PC-3 (cell line): ENCODE measurements at regions of chr2 and their contacts with region 1.

Region 1: GRCh38 chr2:206085742-206086445 is at the start of gene INO80D:
- DNase-seq: peak; percentile 70
- ATAC-seq: peak; percentile 69
- H3K4me3 ChIP-seq: peak within 1 kb of the TSS; percentile 95
- H3K27ac ChIP-seq: peak within 1 kb of the TSS; percentile 87
- H3K4me1 ChIP-seq: peaks cover 16% of the 10 kb centered on the region
- H3K27me3 ChIP-seq: no peaks in the 10 kb centered on the region
- CTCF ChIP-seq: peak; percentile 54
- total RNA-seq, gene INO80D: 8.8 and 9.7 TPM in 2 replicates

Region 2: GRCh38 chr2:206023183-206023582 is 62.7 kb before region 1 on chr2:
- CTCF ChIA-PET with region 1: no interaction called
- POLR2A ChIA-PET with region 1: no interaction called
- intact Hi-C with region 1: loop called (anchors 5 kb)
- DNase-seq: no peak
- ATAC-seq: no peak
- H3K4me3 ChIP-seq: no peak overlapping the region
- H3K27ac ChIP-seq: no peak overlapping the region
- H3K4me1 ChIP-seq: peaks cover 3% of the 10 kb centered on the region; the same call in 1 of the 2 replicates
- H3K27me3 ChIP-seq: no peaks in the 10 kb centered on the region
- CTCF ChIP-seq: no peak; the same call in 1 of the 2 replicates

Region 3: DNA sequence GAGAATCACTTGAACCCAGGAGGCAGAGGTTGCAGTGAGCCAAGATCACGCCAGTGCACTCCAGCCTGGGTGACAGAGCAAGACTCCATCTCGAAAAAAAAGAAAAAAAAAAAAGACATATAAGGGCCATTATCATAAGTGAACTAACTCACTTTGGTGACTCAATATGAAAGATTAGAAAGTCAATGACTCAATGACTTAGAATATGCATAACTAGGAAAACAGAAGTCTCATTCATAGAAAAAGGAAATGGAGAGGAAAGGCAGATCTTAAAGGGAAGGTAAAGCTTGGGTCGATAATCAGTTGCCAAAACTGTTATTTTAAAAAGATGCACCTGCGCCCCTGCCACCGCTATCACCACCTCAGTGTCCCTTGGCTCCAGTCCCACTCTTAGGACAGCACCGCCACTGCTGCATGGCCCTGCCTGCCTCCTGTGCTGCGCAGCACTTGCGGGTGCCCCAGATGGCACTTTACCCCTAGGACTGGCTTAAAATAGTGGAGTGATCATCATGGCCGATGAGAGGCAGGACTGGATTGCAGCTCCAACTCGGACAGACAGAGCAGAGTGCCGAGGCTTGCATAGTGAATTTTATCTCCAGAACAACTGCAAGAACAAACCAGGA is 54.6 kb before region 1 on chr2:
- CTCF ChIA-PET with region 1: interaction called, 3 read pairs
- POLR2A ChIA-PET with region 1: no interaction called
- intact Hi-C with region 1: loop called (anchors 5 kb)
- DNase-seq: peak; percentile 70
- ATAC-seq: peak; percentile 83
- H3K4me3 ChIP-seq: no peak overlapping the region
- H3K27ac ChIP-seq: peak overlapping the region; percentile 26; the same call in 1 of the 2 replicates
- H3K4me1 ChIP-seq: peaks cover 11% of the 10 kb centered on the region
- H3K27me3 ChIP-seq: no peaks in the 10 kb centered on the region
- CTCF ChIP-seq: no peak

Region 4: DNA sequence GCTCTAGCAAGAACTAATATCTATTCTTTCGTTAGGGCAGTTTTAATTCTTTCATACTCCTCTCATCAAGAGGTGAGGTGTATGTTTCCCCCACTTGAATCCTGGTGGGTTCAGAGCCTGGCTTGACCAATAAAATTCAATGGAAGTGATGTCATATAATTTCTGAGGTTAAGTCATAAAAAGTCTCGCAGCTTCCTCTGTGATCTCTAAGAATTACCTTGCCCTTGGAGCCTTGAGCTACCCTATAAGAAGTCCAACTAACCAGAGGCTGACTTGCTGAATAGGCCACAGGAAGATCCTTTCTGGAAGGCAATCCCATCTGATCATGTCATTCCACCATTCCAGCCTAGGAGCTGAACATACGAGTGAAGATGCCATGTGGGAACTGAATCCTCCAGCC is 26.2 kb after region 1 on chr2:
- CTCF ChIA-PET with region 1: no interaction called
- POLR2A ChIA-PET with region 1: no interaction called
- intact Hi-C with region 1: loop called (anchors 2 kb)
- DNase-seq: no peak
- ATAC-seq: 0 out of 2 replicates have a peak, but pooled peaks have one; percentile 14
- H3K4me3 ChIP-seq: no peak overlapping the region
- H3K27ac ChIP-seq: no peak overlapping the region
- H3K4me1 ChIP-seq: peaks cover 11% of the 10 kb centered on the region
- H3K27me3 ChIP-seq: no peaks in the 10 kb centered on the region
- CTCF ChIP-seq: no peak

Region 5: DNA sequence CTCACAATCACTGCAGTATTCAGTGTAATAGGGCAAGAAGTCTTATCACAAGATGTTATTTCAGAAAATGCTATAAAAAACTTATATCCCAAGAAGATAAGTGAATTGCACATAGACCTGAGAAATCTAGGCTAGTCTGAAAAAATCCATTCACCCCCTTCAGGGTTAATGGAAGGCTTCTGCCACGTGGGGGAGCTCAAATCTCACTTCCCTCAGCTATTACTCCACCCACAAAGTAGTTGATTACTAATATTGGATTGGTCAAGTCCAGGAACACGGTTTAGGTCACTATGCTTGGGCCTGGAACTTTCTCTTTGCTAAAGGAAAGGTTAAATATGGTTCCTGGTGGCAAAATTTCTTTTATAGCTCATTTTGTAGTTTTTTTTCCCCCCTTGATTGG is 306.2 kb after region 1 on chr2:
- CTCF ChIA-PET with region 1: no interaction called
- POLR2A ChIA-PET with region 1: no interaction called
- intact Hi-C with region 1: no loop called
- DNase-seq: peak; percentile 67
- ATAC-seq: peak; percentile 71
- H3K4me3 ChIP-seq: no peak overlapping the region
- H3K27ac ChIP-seq: no peak overlapping the region
- H3K4me1 ChIP-seq: no peaks in the 10 kb centered on the region
- H3K27me3 ChIP-seq: no peaks in the 10 kb centered on the region; the same call in 1 of the 2 replicates
- CTCF ChIP-seq: peak; percentile 82